Cardiac septum (tissue), 1 donor: ENCODE measurements at regions of chr20 and their contacts with region 1.

Region 1: DNA sequence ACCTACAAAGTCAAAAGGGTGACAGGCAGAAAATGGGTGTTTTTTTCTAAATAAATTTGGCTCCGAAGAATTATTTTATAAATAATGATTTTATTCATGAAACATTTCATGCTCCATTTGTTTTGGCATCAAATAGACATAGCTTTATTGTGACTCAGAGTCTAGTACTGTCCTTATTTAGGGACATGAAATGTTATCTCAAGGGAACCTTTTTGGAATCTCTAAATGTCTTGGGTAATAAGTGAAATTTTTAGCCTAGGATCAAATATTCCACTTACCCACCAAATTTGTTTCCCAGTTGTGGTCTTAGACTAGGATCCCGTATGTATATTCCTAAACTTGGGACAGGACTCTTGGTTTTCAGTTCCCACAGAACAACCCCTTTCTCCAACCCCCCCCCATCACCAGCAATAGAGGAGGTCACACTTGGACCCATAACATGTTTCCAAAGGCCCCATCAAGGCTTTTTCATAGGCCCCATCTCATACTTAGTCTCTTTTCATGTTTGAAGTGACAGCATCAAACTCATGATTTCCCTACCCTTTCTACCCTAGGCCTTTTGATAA is 81.8 kb downstream of the JAG1 start:
- DNase-seq: no peak

Region 2: GRCh38 chr20:10521068-10521831 is 70.8 kb before region 1 on chr20:
- intact Hi-C with region 1: no loop called
- DNase-seq: no peak

Region 3: DNA sequence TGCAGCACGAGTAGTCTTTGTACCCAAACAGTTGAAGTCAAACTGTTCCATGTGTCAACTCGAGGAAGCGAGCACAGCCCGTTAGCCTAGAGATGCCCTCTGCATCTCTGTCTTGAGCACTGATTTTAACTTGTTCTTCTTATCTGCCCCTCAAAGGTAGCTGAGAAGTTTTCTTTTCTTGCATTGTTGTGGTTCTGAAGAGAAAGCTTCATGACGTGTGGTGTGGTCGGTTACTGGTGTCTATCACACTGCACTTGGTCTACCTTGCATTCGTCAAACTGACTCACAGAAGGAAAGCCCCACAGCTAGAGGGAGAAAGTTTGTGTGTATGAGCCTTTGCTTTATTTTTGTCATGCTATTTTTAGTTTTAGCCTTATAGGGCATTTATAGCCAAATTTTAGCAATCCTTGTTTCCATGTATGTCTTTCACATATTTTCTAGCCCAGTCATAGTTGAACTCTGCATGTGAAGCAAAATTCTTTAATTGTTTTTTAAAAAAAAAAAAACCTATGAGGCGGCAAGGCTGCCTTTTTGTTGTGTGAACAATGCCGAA is 33.3 kb before region 1 on chr20:
- intact Hi-C with region 1: loop called (anchors 5 kb)
- DNase-seq: no peak

Region 4: DNA sequence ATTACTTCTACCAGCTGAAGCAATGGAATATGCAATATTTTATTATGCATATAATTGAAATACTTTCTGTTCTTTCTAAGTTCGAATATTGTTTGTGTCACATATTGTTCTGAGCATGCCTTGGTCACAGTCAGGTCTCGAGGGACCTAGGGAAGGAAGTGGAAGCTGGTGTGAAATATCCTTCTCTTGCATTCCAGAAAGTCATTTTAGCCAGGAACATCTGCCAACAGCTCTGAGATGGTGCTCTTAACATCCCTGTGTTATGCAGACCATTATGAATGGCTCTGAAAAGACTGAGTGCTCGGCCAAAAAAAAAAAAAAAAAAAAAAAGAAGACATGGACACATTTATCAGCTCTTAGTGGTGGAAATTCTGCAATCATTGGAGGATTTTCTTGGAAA is 214.5 kb after region 1 on chr20:
- intact Hi-C with region 1: no loop called
- DNase-seq: no peak